ENCODE measurements at regions of chr12 and their contacts with region 1.

Region 1: DNA sequence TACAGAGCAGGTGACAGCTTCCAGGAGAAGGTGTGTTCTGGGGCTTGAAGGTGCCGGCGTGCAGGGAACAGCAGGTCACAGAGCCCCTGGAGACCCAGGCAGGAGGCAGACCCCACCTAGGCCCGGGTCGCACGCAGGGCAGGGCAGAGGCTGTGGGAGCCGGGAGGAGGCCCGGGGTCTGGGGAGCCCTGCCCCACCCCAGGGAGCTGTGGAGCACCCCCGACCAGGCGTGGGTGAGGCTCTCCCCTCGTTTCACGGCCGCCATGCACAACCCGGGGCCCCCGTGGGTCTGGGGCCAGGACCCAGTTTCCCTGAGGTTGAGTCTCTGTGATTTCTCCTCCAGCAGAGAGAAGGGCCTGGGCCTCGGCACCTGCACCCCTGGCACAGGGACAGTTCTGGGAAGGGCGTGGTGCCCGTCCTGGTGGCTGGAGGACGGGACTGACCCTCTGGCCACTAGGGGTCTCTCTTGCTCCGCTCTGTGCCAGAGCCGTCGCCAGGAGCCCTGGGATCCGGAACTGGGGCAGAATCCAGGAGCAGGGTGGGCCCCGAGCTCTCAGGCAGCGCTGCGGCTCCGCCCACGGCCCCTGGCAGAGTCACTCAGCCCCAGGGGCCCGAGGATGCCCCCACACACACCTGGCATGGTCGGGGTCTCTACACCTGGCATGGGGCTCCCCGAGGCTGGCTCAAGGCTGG is 75.2 kb upstream of the FBRSL1 start:
- DNase-seq: no peak
- H3K4me3 ChIP-seq: no peak overlapping the region
- H3K27ac ChIP-seq: no peak overlapping the region
- H3K4me1 ChIP-seq: no peaks in the 10 kb centered on the region
- H3K27me3 ChIP-seq: no peaks in the 10 kb centered on the region
- CTCF ChIP-seq: peak; percentile 69 to 80 (median 70)

Region 2: DNA sequence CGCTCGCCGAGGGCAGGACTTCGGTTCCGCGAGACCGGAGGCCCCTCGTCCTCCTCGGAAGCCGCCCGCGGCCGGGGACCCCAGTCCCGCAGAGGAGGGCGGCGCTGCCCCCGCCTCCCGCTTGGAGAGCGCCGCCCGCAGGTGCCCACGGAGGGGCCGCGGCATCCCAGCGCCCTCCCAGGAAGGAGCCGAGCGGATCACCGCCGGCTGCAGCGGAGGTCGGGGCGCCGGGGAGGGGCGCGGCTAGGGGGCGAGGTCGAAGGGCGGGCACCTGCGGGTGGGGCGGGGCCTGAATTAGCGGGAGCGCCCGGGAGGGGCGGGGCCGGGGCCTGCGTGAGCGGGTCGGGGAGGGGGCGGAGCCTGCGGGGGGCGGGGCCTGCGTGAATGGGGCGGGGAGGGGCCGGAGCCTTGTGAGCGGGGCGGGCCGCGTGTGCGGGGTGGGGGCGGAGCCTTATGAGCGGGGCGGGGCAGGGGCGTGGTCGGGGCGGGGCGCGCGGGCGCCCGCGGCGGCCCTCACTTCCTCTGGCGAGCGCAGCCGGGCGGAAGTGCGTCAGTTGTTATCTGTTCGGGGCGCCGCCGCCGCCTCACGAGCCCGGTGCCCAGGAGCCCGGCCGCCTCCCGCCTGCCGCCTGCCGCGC is 74.9 kb after region 1 on chr12 and contains the start of gene FBRSL1:
- intact Hi-C with region 1: no loop called
- DNase-seq: peak; percentile 47 to 94
- H3K4me3 ChIP-seq: peak within 1 kb of the TSS; percentile 79 to 92
- H3K27ac ChIP-seq: peak within 1 kb of the TSS; percentile 42 to 60
- H3K4me1 ChIP-seq: peaks cover 10 to 32% of the 10 kb centered on the region in 2 donors
- H3K27me3 ChIP-seq: no peaks in the 10 kb centered on the region
- CTCF ChIP-seq: no peak
- total RNA-seq, gene FBRSL1: 40.7 TPM

Region 3: DNA sequence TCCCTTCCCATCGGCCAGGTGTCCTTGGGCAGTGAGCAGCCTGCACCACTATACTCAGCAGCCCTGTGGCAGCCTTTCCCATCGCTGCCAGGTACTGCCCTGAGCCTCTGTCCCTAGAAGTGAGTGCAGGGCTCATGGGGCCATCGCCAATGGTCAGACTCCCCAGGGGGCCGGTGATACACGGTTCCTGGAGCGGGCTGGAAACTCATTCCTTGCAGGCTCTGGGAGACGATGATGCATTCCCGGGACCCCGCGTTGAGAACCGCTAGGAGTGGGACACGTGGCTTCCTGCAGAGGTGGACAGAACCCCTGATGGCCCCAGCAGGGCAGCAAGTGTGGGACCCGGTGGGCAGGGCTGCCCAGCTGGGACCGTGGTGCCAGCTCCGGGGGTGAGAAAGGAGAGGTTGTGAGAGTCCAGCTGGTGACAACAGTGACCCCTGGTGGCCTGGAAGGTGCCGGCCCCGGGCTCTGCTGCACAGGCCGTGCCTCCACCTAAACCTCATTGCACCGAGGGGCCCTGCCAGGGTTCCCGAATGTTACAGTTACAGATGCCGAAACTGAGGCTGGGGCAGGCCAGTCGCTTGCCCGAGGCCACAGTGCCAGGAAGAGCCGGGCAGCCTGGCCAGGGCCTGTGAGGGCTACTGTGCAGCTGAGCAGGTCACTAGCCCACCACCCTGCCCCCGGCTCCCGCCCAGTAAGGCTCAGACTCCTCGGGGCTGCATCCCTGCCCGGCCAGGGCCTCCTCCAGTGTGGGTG is 109.0 kb after region 1 on chr12:
- intact Hi-C with region 1: loop called (anchors 10 kb)
- DNase-seq: no peak
- H3K4me3 ChIP-seq: no peak overlapping the region
- H3K27ac ChIP-seq: no peak overlapping the region
- H3K4me1 ChIP-seq: no peaks in the 10 kb centered on the region
- H3K27me3 ChIP-seq: no peaks in the 10 kb centered on the region
- CTCF ChIP-seq: peak; percentile 66 to 68 (median 67)

Measured in ascending aorta (tissue), 2 donors.